Left colon (tissue), 2 donors: ENCODE measurements at regions of chr18 and their contacts with region 1.

Region 1: DNA sequence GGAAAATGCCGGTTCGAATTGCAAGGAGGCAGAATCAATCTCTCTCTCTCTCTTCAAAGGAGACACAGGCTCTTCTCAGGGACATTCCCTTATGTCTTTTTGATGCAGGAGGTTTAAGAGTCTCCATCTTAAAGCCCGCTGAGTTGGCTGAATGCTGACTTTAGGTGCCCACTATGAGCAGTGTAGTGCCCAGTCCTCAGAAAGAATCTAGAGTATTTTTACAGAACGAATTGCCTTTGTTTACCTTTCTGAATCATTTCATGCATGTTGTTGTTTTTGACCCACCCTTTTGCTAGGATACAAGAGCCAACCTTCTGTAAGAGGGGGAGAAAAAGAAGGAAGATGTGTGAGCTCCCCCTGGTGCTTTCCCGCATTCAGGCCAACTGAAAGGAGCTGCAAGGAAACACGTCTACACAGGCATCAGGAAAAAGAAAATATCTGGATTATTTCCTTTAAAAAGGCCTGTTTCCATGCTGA is 193.5 kb upstream of the TCF4 start:
- DNase-seq: no peak
- ATAC-seq: no peak

Region 2: DNA sequence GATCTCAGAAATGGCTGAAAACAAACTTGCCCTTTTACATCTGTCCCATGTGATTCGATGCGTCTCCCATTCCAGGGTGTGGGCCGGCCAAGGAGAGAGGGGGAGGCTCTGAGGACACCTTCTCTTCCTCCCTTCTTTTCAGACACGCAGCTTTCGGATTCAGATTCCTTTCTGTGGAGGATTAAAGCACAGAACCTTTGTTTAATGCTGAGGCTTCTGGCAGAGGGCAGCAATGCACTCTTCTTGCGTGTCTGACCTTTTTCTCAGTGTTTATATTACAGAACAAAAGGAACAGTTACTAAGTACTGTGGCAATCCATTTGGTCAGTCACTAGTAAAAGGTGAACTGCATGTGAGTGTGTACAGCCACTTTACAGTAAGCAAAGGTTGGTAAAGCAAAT is 553.3 kb before region 1 on chr18:
- intact Hi-C with region 1: loop called in 1 of 2 experiments (anchors 5 kb)
- DNase-seq: no peak
- ATAC-seq: no peak

Region 3: DNA sequence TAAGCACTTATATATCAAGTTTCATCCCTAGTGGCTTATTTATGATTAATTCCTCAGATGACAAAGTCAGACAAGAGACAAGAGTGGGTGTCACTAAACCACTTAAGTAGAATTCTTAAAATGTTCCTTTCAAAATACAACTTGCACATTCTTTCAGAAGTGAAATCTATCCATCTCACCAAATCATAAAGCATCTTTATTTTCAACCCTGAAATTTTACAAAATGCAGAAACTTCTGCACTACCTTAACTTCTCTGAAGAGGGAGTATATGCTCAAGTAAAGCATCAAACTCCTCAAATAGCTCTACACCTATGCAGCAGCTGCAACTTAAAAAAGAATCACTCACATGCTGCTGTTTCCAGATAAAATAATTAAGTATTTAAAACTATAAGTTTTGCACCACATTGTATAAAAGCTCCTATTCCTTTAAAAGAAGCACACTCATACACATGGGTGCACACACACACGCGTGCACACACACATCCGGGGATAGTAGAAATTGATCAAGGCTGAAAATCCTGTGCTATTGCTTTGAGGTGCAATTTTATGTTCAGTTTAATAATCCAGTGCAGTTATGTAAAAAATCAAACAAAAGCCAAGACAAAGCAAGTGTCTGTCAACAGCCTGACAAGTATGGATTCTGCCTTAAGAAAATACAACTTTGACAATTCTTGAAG is 438.0 kb before region 1 on chr18:
- intact Hi-C with region 1: loop called in 1 of 2 experiments (anchors 10 kb)
- DNase-seq: no peak
- ATAC-seq: no peak

Region 4: GRCh38 chr18:55415258-55415871 is 366.2 kb before region 1 on chr18:
- intact Hi-C with region 1: loop called in 1 of 2 experiments (anchors 5 kb)
- DNase-seq: peak; percentile 65 to 90
- ATAC-seq: peak; percentile 56

Region 5: DNA sequence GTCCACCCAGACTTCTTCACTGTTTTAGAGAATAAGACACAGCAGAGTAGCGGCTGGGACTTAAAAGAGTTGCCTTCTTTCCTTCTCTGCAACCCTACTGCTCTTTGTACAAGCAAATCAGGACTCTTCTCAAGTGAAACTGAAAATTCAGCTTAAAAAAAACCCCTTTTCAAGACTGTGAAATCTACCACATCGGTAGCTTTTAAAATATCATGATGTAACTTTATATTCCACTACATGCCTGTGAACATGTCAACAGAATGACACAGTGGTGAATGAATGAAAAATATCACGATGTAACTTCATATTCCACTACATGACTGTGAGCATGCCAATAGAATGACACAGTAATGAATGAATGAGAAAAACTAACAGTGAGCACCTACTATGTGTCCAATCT is 247.0 kb before region 1 on chr18:
- intact Hi-C with region 1: no loop called
- DNase-seq: no peak
- ATAC-seq: no peak

Region 6: GRCh38 chr18:56728741-56729140 is 947.2 kb after region 1 on chr18:
- intact Hi-C with region 1: no loop called
- DNase-seq: no peak
- ATAC-seq: peak; percentile 71